ENCODE measurements at regions of chr4 and their contacts with region 1.

Region 1: GRCh38 chr4:128060699-128061565 is at the start of gene LARP1B:
- DNase-seq: peak; percentile 97
- ATAC-seq: peak; percentile 97
- total RNA-seq, gene LARP1B: 15.4 TPM

Region 2: DNA sequence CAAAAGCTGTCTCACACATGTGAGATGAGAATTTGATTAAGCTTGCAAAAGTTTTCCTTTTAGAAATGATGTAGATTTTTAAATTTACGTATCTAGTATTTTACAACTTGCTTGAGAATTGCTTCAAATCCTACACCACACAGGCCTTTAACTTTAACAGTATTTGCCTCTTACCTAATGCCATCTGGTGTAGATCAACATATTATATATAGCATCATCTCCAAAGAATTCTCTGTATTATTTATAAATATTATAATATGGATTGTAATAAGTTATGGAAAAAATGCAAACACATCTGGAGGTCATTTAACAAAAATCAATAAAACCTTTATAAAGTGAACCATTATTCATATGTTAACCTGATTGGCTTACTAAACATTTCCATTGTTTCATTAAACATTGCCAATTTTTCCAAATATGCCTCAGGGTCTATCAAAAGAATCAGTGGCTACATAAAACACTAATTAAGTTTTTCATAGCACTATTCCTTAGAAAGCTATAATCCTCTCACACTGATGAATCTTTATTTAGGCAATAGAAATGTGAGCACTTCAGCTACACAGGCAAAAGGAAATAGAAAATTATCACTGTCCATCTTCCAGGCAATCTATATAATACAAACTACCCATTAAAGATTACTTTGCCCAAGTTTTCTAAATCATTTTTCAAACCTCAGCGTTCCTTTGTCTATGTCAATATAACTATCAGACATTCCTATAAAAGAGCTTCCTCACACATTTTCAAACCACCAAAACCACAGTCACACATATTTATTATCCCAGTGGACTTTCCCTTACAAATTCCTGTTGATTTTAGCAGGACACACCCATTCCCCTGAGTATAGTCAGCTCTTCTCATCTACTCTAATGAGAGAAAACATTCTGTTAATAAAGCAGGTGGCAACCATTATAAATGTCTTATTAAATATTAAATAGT is 511.7 kb before region 1 on chr4:
- intact Hi-C with region 1: no loop called
- DNase-seq: no peak
- ATAC-seq: no peak

Region 3: GRCh38 chr4:127844601-127845116 is 216.3 kb before region 1 on chr4:
- intact Hi-C with region 1: no loop called
- DNase-seq: no peak
- ATAC-seq: no peak

Region 4: GRCh38 chr4:127880764-127881562 is 180.0 kb before region 1 on chr4 and contains the start of gene PLK4:
- intact Hi-C with region 1: loop called (anchors 2 kb)
- DNase-seq: peak; percentile 97
- ATAC-seq: peak; percentile 99
- total RNA-seq, gene PLK4: 1.1 TPM

Region 5: DNA sequence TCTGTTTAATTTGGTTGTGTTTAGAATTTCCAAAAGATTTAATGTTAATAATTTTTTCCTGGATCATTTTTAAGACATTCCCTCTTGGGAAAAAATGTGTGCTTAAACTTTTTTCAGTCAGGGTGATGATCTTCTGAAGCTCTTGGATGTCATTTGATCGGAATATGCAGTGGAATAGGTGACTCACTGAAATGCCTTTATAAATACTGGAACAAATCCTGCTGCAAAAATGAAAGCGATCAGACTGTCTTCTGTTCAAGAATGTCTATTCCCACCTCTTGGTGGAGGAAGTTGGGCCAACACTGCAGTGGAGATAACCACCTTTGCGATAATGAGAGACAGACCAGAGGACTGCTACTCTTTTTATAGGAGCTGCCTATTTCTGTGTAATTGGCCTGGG is 46.8 kb after region 1 on chr4:
- intact Hi-C with region 1: no loop called
- DNase-seq: no peak
- ATAC-seq: no peak

Measured in Right ventricle myocardium inferior (tissue), 1 donor.